Mammary epithelial cell (primary cell): ENCODE measurements at regions of chr13 and their contacts with region 1.

Region 1: DNA sequence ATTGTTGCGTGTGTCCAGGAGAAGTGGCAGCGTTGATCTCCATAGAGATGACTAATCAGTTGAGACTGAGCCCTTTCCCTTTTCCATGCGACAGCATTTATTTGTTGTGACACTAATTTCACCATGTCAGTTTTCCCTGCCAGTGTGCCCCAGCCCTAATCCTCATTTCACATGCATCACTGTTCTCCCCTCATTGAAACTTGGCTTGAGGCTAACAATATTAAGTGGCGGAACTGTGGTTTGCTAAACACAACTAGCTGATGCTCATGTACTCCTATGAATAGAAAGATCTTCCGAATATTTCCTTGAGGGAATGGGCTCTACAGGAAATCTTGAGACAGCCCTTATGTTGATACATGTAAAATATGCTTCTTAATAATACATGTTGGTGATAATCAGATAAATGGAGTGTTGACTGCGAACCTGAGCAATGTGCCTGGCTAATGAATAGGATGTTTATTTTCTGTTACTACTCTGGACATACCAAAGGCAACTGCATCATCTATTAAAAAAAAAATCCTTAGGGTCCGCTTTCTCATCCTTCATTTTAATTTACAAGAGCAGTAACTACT is 258.6 kb downstream of the ATP8A2 start:
- DNase-seq: no peak
- H3K4me3 ChIP-seq: no peak overlapping the region
- H3K27ac ChIP-seq: no peak overlapping the region
- H3K4me1 ChIP-seq: no peaks in the 10 kb centered on the region
- H3K27me3 ChIP-seq: no peaks in the 10 kb centered on the region
- CTCF ChIP-seq: no peak

Region 2: GRCh38 chr13:25281193-25281934 is 349.1 kb before region 1 on chr13:
- CTCF ChIA-PET with region 1: no interaction called
- dilution Hi-C with region 1: no loop called
- in situ Hi-C with region 1: no loop called
- intact Hi-C with region 1: no loop called
- DNase-seq: no peak
- H3K4me3 ChIP-seq: no peak overlapping the region
- H3K27ac ChIP-seq: no peak overlapping the region
- H3K4me1 ChIP-seq: peaks cover 9% of the 10 kb centered on the region
- H3K27me3 ChIP-seq: no peaks in the 10 kb centered on the region
- CTCF ChIP-seq: no peak

Region 3: DNA sequence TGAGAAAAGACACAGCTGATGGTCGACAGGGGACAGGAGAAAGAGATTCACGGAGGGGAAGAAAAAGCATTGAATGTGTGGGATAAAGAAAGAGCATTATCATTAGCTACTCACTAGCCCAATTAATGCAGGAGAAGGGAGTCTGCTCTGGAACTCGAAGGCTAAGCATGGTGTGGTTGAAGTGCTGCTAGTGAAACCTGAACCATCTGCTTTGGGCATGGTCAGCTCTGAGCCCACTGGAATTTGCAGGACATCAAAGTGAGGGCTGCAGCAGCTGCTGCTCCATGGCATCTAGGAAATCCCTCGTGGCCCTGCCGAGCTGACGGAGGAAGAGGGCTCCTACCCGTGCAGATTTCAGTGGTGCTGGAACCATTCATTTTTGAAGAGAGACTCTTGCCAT is 61.7 kb after region 1 on chr13:
- CTCF ChIA-PET with region 1: no interaction called
- dilution Hi-C with region 1: no loop called
- in situ Hi-C with region 1: loop called in 1 of 2 experiments (anchors 10 kb)
- intact Hi-C with region 1: no loop called
- DNase-seq: no peak
- H3K4me3 ChIP-seq: no peak overlapping the region
- H3K27ac ChIP-seq: no peak overlapping the region
- H3K4me1 ChIP-seq: no peaks in the 10 kb centered on the region
- H3K27me3 ChIP-seq: no peaks in the 10 kb centered on the region
- CTCF ChIP-seq: no peak